ENCODE measurements at regions of chr4 and their contacts with region 1.

Region 1: DNA sequence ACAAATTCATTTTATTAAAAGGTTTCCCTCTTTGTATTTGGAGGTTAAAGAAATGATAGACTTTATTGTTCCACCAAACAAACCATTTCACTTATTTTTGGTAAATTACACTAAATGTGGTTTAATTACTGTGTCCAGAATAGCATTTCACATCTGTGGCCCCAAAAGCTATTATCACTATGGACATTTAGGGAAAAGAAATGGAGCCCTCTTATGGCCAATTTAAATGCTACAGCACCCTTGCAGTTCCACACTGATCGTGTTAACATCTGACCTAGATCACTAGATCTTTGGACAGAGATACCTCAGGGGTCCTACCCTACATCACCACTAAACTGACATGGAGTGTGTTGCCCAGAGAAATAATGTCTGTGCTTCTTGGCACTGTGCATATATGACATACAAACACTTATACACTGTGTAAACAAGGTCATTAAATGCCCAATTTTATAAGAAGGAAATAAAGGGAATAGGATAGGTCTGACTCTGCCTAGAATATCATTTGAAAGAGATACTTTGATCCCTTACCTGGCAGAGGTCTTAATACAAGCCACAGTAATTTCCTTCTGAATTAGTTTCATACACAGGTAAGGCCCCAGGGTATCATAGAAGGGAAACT is 163.9 kb downstream of the KDR start:
- DNase-seq: peak; percentile 52
- ATAC-seq: peak; percentile 42
- H3K4me3 ChIP-seq: no peak overlapping the region
- H3K27ac ChIP-seq: no peak overlapping the region
- H3K4me1 ChIP-seq: peaks cover 10% of the 10 kb centered on the region
- H3K27me3 ChIP-seq: peaks cover 8% of the 10 kb centered on the region
- CTCF ChIP-seq: peak; percentile 79
- POLR2A ChIP-seq: no peak
- RAD21 ChIP-seq: peak; percentile 80

Region 2: GRCh38 chr4:54322818-54323417 is 638.5 kb before region 1 on chr4:
- CTCF ChIA-PET with region 1: no interaction called
- POLR2A ChIA-PET with region 1: no interaction called
- dilution Hi-C with region 1: no loop called
- in situ Hi-C with region 1: loop called (anchors 5 kb)
- intact Hi-C with region 1: loop called (anchors 1 kb)
- DNase-seq: peak; percentile 59
- ATAC-seq: peak; percentile 81
- H3K4me3 ChIP-seq: no peak overlapping the region
- H3K27ac ChIP-seq: no peak overlapping the region
- H3K4me1 ChIP-seq: no peaks in the 10 kb centered on the region
- H3K27me3 ChIP-seq: no peaks in the 10 kb centered on the region
- CTCF ChIP-seq: peak; percentile 72
- POLR2A ChIP-seq: no peak
- RAD21 ChIP-seq: peak; percentile 86

Region 3: DNA sequence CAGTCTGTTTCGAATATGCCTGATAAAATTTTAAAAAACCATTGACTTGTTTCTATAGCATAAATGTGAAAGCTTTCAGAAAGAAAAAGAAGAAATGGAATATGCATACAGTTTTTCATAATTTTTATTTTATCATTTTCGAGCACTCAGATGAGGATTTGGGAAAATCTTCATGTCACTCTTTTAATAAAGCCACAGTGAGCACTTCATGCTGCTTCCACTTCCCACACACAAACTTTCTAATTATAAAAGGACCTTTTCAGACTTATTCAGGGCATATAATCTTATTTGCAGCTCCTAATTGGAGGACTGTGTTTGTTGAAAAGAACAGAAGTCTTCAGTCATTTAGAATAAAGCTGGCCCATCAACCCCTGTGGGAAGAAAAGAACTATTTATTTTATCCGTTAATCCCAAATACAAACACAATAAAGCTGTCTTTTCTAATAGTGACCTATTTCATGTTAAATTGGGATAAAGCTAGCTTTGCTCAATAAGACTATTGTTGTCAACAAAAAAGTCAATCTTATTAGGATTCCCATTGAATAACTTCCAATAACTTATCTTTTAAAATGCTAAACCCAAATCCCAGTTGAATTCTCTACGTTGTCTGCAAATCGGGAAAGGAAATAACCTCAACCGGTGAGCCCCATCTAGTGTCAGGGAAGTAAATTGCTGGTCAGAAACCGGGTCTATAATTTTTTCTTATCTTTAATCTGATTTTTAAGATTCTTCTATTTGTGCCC is 520.9 kb before region 1 on chr4:
- CTCF ChIA-PET with region 1: interaction called, 3 read pairs
- POLR2A ChIA-PET with region 1: no interaction called
- dilution Hi-C with region 1: no loop called
- in situ Hi-C with region 1: no loop called
- intact Hi-C with region 1: loop called (anchors 2 kb)
- DNase-seq: peak; percentile 34
- ATAC-seq: no peak
- H3K4me3 ChIP-seq: no peak overlapping the region
- H3K27ac ChIP-seq: no peak overlapping the region
- H3K4me1 ChIP-seq: no peaks in the 10 kb centered on the region
- H3K27me3 ChIP-seq: peaks cover 13% of the 10 kb centered on the region
- CTCF ChIP-seq: peak; percentile 61
- POLR2A ChIP-seq: no peak
- RAD21 ChIP-seq: peak; percentile 60

Region 4: DNA sequence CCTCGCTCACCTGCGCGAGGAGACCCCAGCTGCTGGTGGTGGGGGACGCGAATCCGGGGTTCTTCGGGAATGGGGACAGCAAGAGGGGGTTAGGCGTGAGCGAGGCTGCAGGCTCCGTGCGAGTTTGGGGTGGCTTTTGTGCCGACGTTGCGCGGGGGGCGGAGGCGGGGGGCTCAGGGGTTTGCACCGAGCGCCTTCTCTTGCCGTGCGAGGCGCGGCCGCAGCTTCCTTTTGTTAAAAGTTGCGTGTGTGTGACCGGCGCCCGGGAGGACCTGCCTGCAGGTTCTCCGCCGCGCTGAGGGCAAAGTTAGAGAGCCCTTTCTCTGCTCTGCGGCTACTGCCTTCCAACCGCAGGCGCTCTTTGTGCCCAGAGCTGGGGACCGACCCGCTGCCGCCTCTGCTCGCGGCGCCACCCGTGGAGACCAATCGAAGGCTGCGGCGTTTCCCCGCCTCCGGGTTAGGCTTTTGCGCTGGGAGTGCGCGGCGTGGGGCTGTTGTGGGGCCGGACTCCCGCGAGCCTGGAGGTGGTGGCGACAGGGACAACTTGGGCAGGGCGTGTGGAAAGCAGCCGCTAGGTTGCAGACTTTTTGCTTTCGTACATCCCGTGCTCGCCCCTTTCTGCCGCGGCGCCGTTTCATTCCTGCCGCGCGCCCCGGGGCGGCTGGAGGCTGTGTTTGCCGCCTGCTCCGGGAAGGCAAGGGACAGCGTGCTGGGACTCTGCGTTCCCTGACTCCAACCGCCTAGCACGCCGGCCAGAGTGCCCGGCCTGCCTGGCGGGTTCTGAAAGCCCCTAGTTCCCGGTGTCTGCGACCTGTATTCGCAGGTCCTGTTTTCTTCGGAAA is 303.0 kb before region 1 on chr4:
- CTCF ChIA-PET with region 1: interaction called, 6 read pairs
- POLR2A ChIA-PET with region 1: no interaction called
- dilution Hi-C with region 1: no loop called
- in situ Hi-C with region 1: no loop called
- intact Hi-C with region 1: loop called (anchors 2 kb)
- DNase-seq: peak; percentile 36
- ATAC-seq: peak; percentile 60
- H3K4me3 ChIP-seq: peak overlapping the region; percentile 74
- H3K27ac ChIP-seq: peak overlapping the region; percentile 36; the same call in 1 of the 2 replicates
- H3K4me1 ChIP-seq: peaks cover 16% of the 10 kb centered on the region
- H3K27me3 ChIP-seq: peaks cover 22% of the 10 kb centered on the region
- CTCF ChIP-seq: 0 out of 2 replicates have a peak, but pooled peaks have one; percentile 15
- POLR2A ChIP-seq: no peak
- RAD21 ChIP-seq: no peak

Region 5: DNA sequence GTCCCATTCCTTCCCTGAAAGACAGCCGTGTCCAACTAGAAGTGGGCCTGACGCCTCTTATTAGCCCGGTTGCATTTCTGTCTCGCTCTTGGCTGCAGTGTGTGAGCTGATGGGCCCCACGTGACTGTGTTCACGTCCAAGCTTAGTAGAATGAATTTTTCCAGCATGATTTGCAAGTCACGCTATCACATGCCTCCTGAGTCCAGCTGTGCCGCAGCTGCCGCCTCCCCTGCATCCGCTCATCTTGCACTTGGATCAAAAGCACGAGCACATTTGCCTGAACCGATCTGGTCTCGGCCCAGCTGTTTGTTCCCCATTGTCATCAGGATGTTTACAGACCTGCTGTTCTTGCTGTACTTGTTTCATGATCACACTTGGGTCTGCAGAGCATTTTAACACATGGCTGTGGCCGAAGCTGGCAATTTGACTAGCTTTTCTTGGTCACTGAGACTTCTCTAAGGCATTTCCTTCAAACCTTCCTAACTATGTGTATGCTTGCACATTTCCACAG is 177.2 kb before region 1 on chr4:
- CTCF ChIA-PET with region 1: no interaction called
- POLR2A ChIA-PET with region 1: no interaction called
- dilution Hi-C with region 1: no loop called
- in situ Hi-C with region 1: no loop called
- intact Hi-C with region 1: loop called (anchors 10 kb)
- DNase-seq: peak; percentile 91
- ATAC-seq: peak; percentile 86
- H3K4me3 ChIP-seq: no peak overlapping the region
- H3K27ac ChIP-seq: peak overlapping the region; percentile 95
- H3K4me1 ChIP-seq: peaks cover 12% of the 10 kb centered on the region
- H3K27me3 ChIP-seq: no peaks in the 10 kb centered on the region
- CTCF ChIP-seq: no peak
- POLR2A ChIP-seq: no peak
- RAD21 ChIP-seq: no peak

Region 6: GRCh38 chr4:54909961-54910360 is 51.5 kb before region 1 on chr4:
- CTCF ChIA-PET with region 1: no interaction called
- POLR2A ChIA-PET with region 1: no interaction called
- dilution Hi-C with region 1: no loop called
- in situ Hi-C with region 1: no loop called
- intact Hi-C with region 1: no loop called
- DNase-seq: no peak
- ATAC-seq: no peak
- H3K4me3 ChIP-seq: no peak overlapping the region
- H3K27ac ChIP-seq: no peak overlapping the region
- H3K4me1 ChIP-seq: peaks cover 1% of the 10 kb centered on the region; the same call in 1 of the 2 replicates
- H3K27me3 ChIP-seq: peaks cover 2% of the 10 kb centered on the region; the same call in 1 of the 2 replicates
- CTCF ChIP-seq: no peak
- POLR2A ChIP-seq: no peak
- RAD21 ChIP-seq: no peak

Region 7: GRCh38 chr4:55568905-55569504 is 607.5 kb after region 1 on chr4:
- CTCF ChIA-PET with region 1: no interaction called
- POLR2A ChIA-PET with region 1: no interaction called
- dilution Hi-C with region 1: no loop called
- in situ Hi-C with region 1: no loop called
- intact Hi-C with region 1: no loop called
- DNase-seq: no peak
- ATAC-seq: no peak
- H3K4me3 ChIP-seq: no peak overlapping the region
- H3K27ac ChIP-seq: no peak overlapping the region
- H3K4me1 ChIP-seq: no peaks in the 10 kb centered on the region
- H3K27me3 ChIP-seq: no peaks in the 10 kb centered on the region; the same call in 1 of the 2 replicates
- CTCF ChIP-seq: no peak
- POLR2A ChIP-seq: no peak
- RAD21 ChIP-seq: no peak

Measured in IMR-90 (cell line).